CD4-positive, alpha-beta T cell (primary cell): ENCODE measurements at regions of chr4 and their contacts with region 1.

Region 1: GRCh38 chr4:26860157-26860921 is at the start of gene STIM2:
- DNase-seq: peak; percentile 95 to 100 (median 98)
- ATAC-seq: peak; percentile 56
- H3K4me3 ChIP-seq: peak within 1 kb of the TSS; percentile 82
- H3K4me3 Mint-ChIP-seq: peak within 1 kb of the TSS; percentile 99
- H3K27ac ChIP-seq: peak within 1 kb of the TSS; percentile 71 to 95
- H3K27ac Mint-ChIP-seq: peak within 1 kb of the TSS; percentile 95
- H3K4me1 ChIP-seq: peaks cover 34% of the 10 kb centered on the region
- H3K4me1 Mint-ChIP-seq: peaks cover 62% of the 10 kb centered on the region
- H3K27me3 ChIP-seq: no peaks in the 10 kb centered on the region
- H3K27me3 Mint-ChIP-seq: no peaks in the 10 kb centered on the region
- CTCF ChIP-seq: peak; percentile 45
- total RNA-seq, gene STIM2: 53.7 to 54.9 TPM

Region 2: DNA sequence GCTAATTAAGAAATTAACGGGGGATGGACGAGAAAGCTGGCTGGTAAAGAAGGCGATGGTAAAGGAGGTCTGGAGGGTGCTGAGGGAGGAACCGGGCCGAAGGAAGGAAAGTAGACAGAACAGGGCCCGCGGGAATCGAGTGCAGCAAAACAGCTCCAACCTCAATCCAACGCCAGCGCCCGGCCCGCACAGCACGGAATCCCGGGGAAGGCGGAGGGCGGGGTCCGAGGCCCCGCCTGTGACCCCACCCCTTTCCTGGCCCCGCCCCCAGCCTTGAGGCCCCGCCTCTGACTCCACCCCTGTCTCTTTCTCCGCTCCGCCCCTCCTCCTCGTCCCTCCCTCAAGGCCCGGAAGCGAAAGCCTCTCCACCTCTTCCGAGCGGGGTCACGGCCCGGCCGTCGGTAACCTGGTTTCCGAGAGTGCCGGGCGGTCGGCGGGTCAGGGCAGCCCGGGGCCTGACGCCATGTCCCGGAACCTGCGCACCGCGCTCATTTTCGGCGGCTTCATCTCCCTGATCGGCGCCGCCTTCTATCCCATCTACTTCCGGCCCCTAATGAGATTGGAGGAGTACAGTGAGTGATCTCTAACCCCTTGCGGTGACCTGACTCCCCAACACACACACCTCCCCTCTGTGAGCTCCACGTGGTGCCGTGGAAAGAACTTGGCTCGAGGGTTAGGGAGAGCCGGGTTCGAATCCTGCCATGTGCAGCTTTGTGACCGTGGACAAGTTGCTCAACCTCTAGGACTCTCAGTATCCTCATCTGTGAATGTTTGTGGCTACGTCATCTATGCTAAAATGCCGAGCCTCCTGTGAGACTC is 946.3 kb before region 1 on chr4 and contains the start of gene SMIM20:
- CTCF ChIA-PET with region 1: no interaction called
- POLR2A ChIA-PET with region 1: interaction called, 3 read pairs
- intact Hi-C with region 1: loop called in 1 of 2 experiments (anchors 5 kb)
- DNase-seq: peak; percentile 82 to 96 (median 86)
- ATAC-seq: peak; percentile 89
- H3K4me3 ChIP-seq: peak within 1 kb of the TSS; percentile 92
- H3K4me3 Mint-ChIP-seq: peak within 1 kb of the TSS; percentile 94
- H3K27ac ChIP-seq: peak within 1 kb of the TSS; percentile 79 to 85
- H3K27ac Mint-ChIP-seq: peak within 1 kb of the TSS; percentile 96
- H3K4me1 ChIP-seq: peaks cover 25% of the 10 kb centered on the region
- H3K4me1 Mint-ChIP-seq: peaks cover 26% of the 10 kb centered on the region
- H3K27me3 ChIP-seq: no peaks in the 10 kb centered on the region
- H3K27me3 Mint-ChIP-seq: no peaks in the 10 kb centered on the region
- CTCF ChIP-seq: no peak
- total RNA-seq, gene SMIM20: 7.2 to 9.1 TPM

Region 3: GRCh38 chr4:26873391-26874026 is 13.2 kb after region 1 on chr4:
- CTCF ChIA-PET with region 1: interaction called, 18 read pairs
- POLR2A ChIA-PET with region 1: interaction called, 29 read pairs
- intact Hi-C with region 1: no loop called
- DNase-seq: peak in 11 of 14 experiments; percentile 25 to 91 (median 47)
- ATAC-seq: peak; percentile 92
- H3K4me3 ChIP-seq: no peak overlapping the region
- H3K4me3 Mint-ChIP-seq: peak overlapping the region; percentile 62
- H3K27ac ChIP-seq: peak overlapping the region; percentile 24 to 49
- H3K27ac Mint-ChIP-seq: peak overlapping the region; percentile 68
- H3K4me1 ChIP-seq: peaks cover 39% of the 10 kb centered on the region
- H3K4me1 Mint-ChIP-seq: peaks cover 86% of the 10 kb centered on the region
- H3K27me3 ChIP-seq: no peaks in the 10 kb centered on the region
- H3K27me3 Mint-ChIP-seq: no peaks in the 10 kb centered on the region
- CTCF ChIP-seq: no peak

Region 4: GRCh38 chr4:26896636-26897035 is 36.3 kb after region 1 on chr4:
- CTCF ChIA-PET with region 1: interaction called, 3 read pairs
- POLR2A ChIA-PET with region 1: interaction called, 4 read pairs
- intact Hi-C with region 1: loop called in 1 of 2 experiments (anchors 5 kb)
- DNase-seq: no peak
- ATAC-seq: no peak
- H3K4me3 ChIP-seq: no peak overlapping the region
- H3K4me3 Mint-ChIP-seq: no peak overlapping the region
- H3K27ac ChIP-seq: no peak overlapping the region
- H3K27ac Mint-ChIP-seq: no peak overlapping the region
- H3K4me1 ChIP-seq: peaks cover 4% of the 10 kb centered on the region
- H3K4me1 Mint-ChIP-seq: peaks cover 83% of the 10 kb centered on the region
- H3K27me3 ChIP-seq: no peaks in the 10 kb centered on the region
- H3K27me3 Mint-ChIP-seq: no peaks in the 10 kb centered on the region
- CTCF ChIP-seq: no peak

Region 5: DNA sequence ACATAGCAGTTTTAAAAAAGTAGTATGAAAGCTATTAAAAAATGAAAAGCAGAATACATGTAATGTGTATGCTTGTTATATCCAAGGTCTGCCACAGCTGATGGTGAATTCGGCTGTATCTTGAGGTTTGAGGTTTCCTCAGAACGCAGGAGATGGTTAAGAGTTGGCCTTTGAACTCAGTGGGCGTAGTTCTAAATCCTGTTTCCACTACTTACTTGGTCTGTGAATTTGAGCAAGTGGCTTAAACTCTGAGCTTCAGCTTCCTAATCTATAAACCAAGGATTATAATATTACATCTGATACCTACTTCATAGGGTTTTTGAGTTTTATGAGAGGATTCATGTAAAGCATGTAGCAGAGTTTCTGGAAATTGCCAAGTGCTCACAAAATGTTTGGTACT is 125.5 kb after region 1 on chr4:
- CTCF ChIA-PET with region 1: no interaction called
- POLR2A ChIA-PET with region 1: interaction called, 32 read pairs
- intact Hi-C with region 1: loop called in 1 of 2 experiments (anchors 5 kb)
- DNase-seq: peak in 6 of 14 experiments; percentile 15 to 79 (median 58)
- ATAC-seq: peak; percentile 98
- H3K4me3 ChIP-seq: no peak overlapping the region
- H3K4me3 Mint-ChIP-seq: peak overlapping the region; percentile 26
- H3K27ac ChIP-seq: no peak overlapping the region
- H3K27ac Mint-ChIP-seq: peak overlapping the region; percentile 12
- H3K4me1 ChIP-seq: peaks cover 10% of the 10 kb centered on the region
- H3K4me1 Mint-ChIP-seq: peaks cover 73% of the 10 kb centered on the region
- H3K27me3 ChIP-seq: no peaks in the 10 kb centered on the region
- H3K27me3 Mint-ChIP-seq: no peaks in the 10 kb centered on the region
- CTCF ChIP-seq: no peak